ENCODE measurements at regions of chr5 and their contacts with region 1.

Region 1: GRCh38 chr5:173293817-173294672 is 34.2 kb downstream of the STC2 start:
- H3K4me3 Mint-ChIP-seq: no peak overlapping the region
- H3K27ac Mint-ChIP-seq: no peak overlapping the region
- H3K4me1 Mint-ChIP-seq: peaks cover 8% of the 10 kb centered on the region
- H3K27me3 Mint-ChIP-seq: peaks cover 61% of the 10 kb centered on the region

Region 2: DNA sequence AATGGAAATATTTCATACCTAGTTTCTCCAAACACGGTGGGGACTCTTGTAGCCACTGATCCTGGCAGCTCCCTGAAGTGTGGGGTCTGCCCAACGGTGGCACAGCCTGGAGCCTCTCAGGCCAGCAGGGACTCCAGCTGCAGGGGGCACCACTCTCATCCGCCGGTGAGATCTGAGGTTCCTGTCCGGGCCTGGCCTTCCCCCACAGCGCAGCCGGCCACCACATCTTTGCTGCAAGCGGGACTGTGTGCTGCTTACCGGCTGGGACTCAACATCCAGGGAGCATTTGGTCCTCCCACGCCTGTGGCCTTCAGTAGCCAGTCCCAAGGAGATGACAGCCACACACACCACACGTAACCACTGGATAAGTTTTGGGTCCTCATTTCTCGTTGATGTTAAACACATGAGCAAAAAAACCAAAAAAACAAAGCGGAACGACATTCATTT is 51.3 kb before region 1 on chr5:
- intact Hi-C with region 1: no loop called
- H3K4me3 Mint-ChIP-seq: no peak overlapping the region
- H3K27ac Mint-ChIP-seq: no peak overlapping the region
- H3K4me1 Mint-ChIP-seq: peaks cover 26% of the 10 kb centered on the region
- H3K27me3 Mint-ChIP-seq: peaks cover 95% of the 10 kb centered on the region

Region 3: DNA sequence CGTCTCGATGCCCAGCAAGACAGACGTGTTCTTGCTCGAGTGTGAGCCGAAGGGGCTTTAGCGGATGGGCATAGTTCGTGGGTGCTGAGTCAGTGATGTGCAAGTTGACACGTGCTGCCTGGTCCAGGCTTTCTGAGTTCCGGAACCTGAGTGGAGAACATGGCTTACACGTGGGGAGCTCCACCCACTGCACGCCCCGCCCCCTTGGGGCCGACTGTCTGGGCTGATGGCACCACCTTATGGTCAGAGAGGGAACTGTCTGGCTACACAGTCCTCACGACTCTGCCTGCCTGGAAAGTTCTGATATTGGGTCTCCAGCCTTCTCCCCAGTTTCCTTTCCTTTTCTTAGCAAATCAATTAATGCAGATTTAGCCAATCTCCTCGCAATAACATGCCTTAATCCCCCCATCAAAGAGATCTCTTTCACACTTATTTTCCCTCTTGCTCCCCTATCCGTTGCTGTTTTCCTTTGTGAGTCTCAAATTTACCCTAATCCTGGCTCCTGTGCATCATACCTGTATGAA is 38.0 kb after region 1 on chr5:
- intact Hi-C with region 1: loop called (anchors 1 kb)
- H3K4me3 Mint-ChIP-seq: no peak overlapping the region
- H3K27ac Mint-ChIP-seq: no peak overlapping the region
- H3K4me1 Mint-ChIP-seq: peaks cover 28% of the 10 kb centered on the region
- H3K27me3 Mint-ChIP-seq: peaks cover 69% of the 10 kb centered on the region

Region 4: GRCh38 chr5:173573126-173573960 is 279.3 kb after region 1 on chr5:
- intact Hi-C with region 1: loop called (anchors 1 kb)
- H3K4me3 Mint-ChIP-seq: no peak overlapping the region
- H3K27ac Mint-ChIP-seq: no peak overlapping the region
- H3K4me1 Mint-ChIP-seq: peaks cover 7% of the 10 kb centered on the region
- H3K27me3 Mint-ChIP-seq: peaks cover 17% of the 10 kb centered on the region

Region 5: GRCh38 chr5:173972925-173973615 is 679.0 kb after region 1 on chr5:
- intact Hi-C with region 1: loop called (anchors 5 kb)
- H3K4me3 Mint-ChIP-seq: peak overlapping the region; percentile 77
- H3K27ac Mint-ChIP-seq: peak overlapping the region; percentile 15
- H3K4me1 Mint-ChIP-seq: peaks cover 26% of the 10 kb centered on the region
- H3K27me3 Mint-ChIP-seq: peaks cover 40% of the 10 kb centered on the region